CD8-positive, alpha-beta T cell (primary cell): ENCODE measurements at regions of chr11 and their contacts with region 1.

Region 1: DNA sequence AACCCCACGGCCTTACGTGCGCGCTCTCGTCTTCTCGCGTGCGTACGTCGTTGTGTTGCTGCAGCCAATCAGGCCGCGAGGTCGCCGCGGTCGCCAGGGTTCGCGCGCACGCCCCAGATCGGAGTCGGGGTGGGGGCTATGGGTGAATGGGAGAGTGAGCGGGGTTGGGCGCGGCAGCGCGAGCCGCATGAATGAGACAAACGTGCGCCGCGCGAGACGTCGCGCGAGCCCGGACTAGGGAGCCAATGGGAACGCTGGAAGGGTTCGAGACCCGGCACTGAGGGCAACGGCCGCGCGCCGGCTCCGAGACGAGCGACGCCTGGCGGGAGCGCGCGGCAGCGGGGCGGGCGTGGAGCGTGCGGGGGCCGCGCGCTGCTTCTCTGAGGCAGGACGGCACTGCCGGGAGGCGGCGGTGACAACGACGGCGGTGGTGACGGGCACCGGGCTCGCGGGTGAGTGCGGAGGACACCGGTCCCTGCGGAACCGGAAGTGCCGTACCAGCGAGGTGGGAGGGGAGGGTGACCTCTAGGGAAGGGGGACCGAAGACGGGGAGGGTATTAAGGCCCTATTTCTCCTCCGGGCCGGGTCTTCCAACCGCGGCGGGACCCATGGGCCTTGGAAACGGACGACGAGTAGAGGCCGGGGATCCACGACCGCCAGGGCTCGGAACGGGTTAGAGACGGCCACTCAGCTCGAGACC is at the start of gene ZDHHC5:
- DNase-seq: peak; percentile 99 to 100 (median 99)
- ATAC-seq: peak; percentile 85
- H3K4me3 ChIP-seq: peak within 1 kb of the TSS; percentile 83 to 96
- H3K4me3 Mint-ChIP-seq: peak within 1 kb of the TSS; percentile 85
- H3K27ac ChIP-seq: peak within 1 kb of the TSS; percentile 91 to 99
- H3K27ac Mint-ChIP-seq: peak within 1 kb of the TSS; percentile 97
- H3K4me1 ChIP-seq: peaks cover 41% of the 10 kb centered on the region
- H3K4me1 Mint-ChIP-seq: peaks cover 56% of the 10 kb centered on the region
- H3K27me3 ChIP-seq: no peaks in the 10 kb centered on the region
- H3K27me3 Mint-ChIP-seq: no peaks in the 10 kb centered on the region
- CTCF ChIP-seq: peak; percentile 31
- total RNA-seq, gene ZDHHC5: 65.0 to 66.7 TPM

Region 2: GRCh38 chr11:57303990-57304579 is 363.8 kb before region 1 on chr11:
- CTCF ChIA-PET with region 1: no interaction called
- POLR2A ChIA-PET with region 1: no interaction called
- intact Hi-C with region 1: no loop called
- DNase-seq: no peak
- ATAC-seq: no peak
- H3K4me3 ChIP-seq: no peak overlapping the region
- H3K4me3 Mint-ChIP-seq: no peak overlapping the region
- H3K27ac ChIP-seq: no peak overlapping the region
- H3K27ac Mint-ChIP-seq: no peak overlapping the region
- H3K4me1 ChIP-seq: no peaks in the 10 kb centered on the region
- H3K4me1 Mint-ChIP-seq: no peaks in the 10 kb centered on the region
- H3K27me3 ChIP-seq: no peaks in the 10 kb centered on the region
- H3K27me3 Mint-ChIP-seq: no peaks in the 10 kb centered on the region
- CTCF ChIP-seq: no peak

Region 3: DNA sequence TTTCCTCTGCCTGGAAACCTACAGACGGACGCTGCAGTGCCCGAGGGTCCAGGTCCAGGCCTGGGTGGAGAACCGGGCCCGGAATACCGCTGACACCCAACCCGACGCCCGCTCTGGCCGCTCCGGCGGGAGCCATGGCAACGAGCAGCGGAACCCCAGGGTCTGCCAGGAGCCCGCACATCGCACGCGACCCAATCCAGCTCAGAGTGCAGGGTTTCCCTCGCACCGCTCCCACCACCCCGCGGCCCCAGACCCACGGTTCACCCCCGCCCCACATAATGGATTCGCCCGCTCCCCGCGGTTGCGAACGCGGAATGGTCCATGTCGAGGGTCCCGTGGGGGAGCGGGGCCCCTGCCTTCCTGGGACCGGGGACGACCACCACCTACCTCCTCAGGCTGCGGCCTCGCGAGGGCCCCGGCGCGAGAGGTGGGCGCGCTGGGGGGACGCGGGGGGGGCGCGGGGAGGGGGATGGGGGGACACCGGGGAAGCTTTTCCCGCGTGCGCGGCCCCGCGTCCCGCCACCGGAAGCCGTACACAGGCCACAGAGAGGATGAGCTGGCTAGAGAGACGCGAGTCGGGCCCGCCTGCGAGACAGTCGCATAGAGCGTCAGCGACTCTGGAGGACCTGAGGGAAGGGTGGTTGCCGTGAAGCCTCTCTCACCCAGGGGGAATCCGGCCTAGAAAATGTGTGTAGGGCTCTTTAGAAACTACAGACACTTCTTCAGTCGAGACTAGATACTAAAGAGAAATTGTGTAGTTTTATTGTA is 332.4 kb before region 1 on chr11 and contains the start of gene SSRP1:
- CTCF ChIA-PET with region 1: no interaction called
- POLR2A ChIA-PET with region 1: interaction called, 3 read pairs
- intact Hi-C with region 1: loop called (anchors 1 to 5 kb)
- DNase-seq: peak; percentile 70 to 95 (median 86)
- ATAC-seq: peak; percentile 96
- H3K4me3 ChIP-seq: peak within 1 kb of the TSS; percentile 78 to 82
- H3K4me3 Mint-ChIP-seq: peak within 1 kb of the TSS; percentile 86
- H3K27ac ChIP-seq: peak within 1 kb of the TSS; percentile 83 to 91
- H3K27ac Mint-ChIP-seq: peak within 1 kb of the TSS; percentile 94
- H3K4me1 ChIP-seq: peaks cover 23% of the 10 kb centered on the region
- H3K4me1 Mint-ChIP-seq: peaks cover 33% of the 10 kb centered on the region
- H3K27me3 ChIP-seq: no peaks in the 10 kb centered on the region
- H3K27me3 Mint-ChIP-seq: no peaks in the 10 kb centered on the region
- CTCF ChIP-seq: no peak
- total RNA-seq, gene SSRP1: 34.3 to 36.3 TPM

Region 4: DNA sequence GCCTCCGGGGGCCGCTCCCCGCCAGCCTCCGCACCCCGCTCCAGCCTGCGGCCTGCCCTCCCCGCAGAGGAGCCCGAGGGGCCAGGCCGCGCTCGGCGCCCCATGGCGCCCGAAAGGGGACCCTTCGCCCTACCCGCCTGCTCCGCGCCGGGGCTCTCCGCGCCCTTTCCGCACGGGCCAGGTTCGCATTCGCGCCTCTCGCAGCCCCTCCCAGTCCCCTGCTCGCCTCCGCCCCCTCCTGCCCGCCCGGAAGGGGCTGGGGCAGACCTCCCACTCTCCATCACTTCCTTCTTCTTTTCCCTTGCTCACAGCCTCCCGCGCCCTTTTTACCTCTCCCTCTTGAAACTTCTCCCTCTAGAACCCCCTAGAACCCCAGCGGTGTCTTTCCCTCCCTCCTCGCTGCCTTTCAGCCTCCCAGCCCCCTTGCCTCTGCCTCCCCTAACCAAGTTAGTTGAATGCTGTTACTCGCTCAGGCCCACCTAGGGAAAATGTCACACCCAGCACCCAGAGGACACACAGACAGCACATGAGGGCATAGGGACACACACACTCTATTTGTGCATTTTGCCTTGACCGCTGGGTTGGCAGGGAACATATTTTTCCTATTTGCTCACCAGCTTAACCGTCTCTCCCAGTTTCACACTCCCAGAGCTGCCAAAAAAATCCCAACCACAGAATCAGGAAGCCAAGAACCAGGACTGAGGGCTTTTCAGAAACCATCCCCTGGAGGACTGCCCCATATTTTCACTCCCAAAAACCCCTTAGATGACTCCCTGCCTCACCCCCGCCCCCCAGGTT is 240.8 kb before region 1 on chr11 and contains the start of gene SLC43A3:
- CTCF ChIA-PET with region 1: no interaction called
- POLR2A ChIA-PET with region 1: no interaction called
- intact Hi-C with region 1: loop called in 1 of 2 experiments (anchors 1 kb)
- DNase-seq: peak in 8 of 9 experiments; percentile 46 to 80 (median 64)
- ATAC-seq: peak; percentile 32
- H3K4me3 ChIP-seq: peak within 1 kb of the TSS; percentile 47 to 63
- H3K4me3 Mint-ChIP-seq: peak within 1 kb of the TSS; percentile 86
- H3K27ac ChIP-seq: peak within 1 kb of the TSS in 1 of 2 experiments; percentile 85
- H3K27ac Mint-ChIP-seq: peak within 1 kb of the TSS; percentile 89
- H3K4me1 ChIP-seq: peaks cover 31% of the 10 kb centered on the region
- H3K4me1 Mint-ChIP-seq: peaks cover 46% of the 10 kb centered on the region
- H3K27me3 ChIP-seq: no peaks in the 10 kb centered on the region
- H3K27me3 Mint-ChIP-seq: no peaks in the 10 kb centered on the region
- CTCF ChIP-seq: no peak
- total RNA-seq, gene SLC43A3: 9.3 to 11.3 TPM

Region 5: DNA sequence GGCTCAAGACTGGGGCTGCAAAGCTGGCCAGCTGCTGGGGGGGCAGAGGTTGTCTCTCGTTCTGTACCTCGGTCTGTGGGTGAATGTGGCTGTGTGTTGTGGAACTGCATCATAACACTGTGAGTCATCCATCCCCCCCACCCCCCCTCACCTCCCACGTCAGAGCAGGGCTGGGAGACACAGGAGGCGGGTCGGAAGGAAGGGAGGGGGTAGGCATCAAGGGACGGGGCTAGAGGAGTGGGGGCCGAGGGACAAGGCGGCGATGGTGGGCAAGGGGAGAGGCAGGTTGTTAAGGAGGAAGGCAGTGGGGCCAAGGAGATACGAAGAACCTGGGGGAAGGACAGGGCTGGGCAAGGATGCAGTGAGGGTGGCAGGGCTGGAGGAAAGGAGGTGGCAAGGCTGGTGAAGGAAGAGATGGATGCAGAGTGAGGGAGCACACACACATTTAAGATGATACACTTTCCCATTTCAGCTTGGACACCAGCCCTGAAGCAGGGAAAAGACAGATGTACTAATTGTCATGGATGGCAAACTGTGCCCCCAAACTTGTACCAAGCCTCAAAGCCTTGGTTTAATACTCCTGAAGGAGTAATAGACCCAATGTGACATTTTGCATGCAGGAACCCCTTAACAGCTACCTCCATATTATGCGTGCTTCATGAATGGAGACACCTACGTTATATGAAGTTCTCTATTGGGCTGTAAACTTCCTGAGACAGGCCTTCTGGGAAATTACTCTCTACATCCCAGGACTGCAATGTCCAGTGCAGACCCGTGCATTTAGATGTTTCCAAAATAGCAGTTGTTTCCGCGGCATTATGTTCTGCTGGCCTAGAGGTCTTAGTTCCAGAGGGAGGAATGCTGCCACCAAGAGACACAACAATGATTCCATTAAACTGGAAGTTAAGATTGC is 17.8 kb before region 1 on chr11 and contains the start of gene YPEL4:
- CTCF ChIA-PET with region 1: interaction called, 5 read pairs
- POLR2A ChIA-PET with region 1: interaction called, 4 read pairs
- intact Hi-C with region 1: loop called (anchors 2 kb)
- DNase-seq: peak; percentile 52 to 93 (median 79)
- ATAC-seq: peak; percentile 88
- H3K4me3 ChIP-seq: peak within 1 kb of the TSS; percentile 53 to 78
- H3K4me3 Mint-ChIP-seq: peak within 1 kb of the TSS; percentile 86
- H3K27ac ChIP-seq: peak within 1 kb of the TSS; percentile 41 to 68
- H3K27ac Mint-ChIP-seq: peak within 1 kb of the TSS; percentile 91
- H3K4me1 ChIP-seq: peaks cover 19% of the 10 kb centered on the region
- H3K4me1 Mint-ChIP-seq: peaks cover 53% of the 10 kb centered on the region
- H3K27me3 ChIP-seq: peaks cover 0 to 20% of the 10 kb centered on the region in 2 experiments
- H3K27me3 Mint-ChIP-seq: peaks cover 41% of the 10 kb centered on the region
- CTCF ChIP-seq: no peak
- total RNA-seq, gene YPEL4: 7.2 to 7.9 TPM

Region 6: GRCh38 chr11:57657194-57658022 is 10.5 kb before region 1 on chr11 and contains the start of gene CLP1:
- CTCF ChIA-PET with region 1: interaction called, 4 read pairs
- POLR2A ChIA-PET with region 1: interaction called, 6 read pairs
- intact Hi-C with region 1: loop called (anchors 1 kb)
- DNase-seq: peak; percentile 97 to 100 (median 99)
- ATAC-seq: peak; percentile 94
- H3K4me3 ChIP-seq: peak within 1 kb of the TSS; percentile 59 to 74
- H3K4me3 Mint-ChIP-seq: peak within 1 kb of the TSS; percentile 94
- H3K27ac ChIP-seq: peak within 1 kb of the TSS; percentile 83
- H3K27ac Mint-ChIP-seq: peak within 1 kb of the TSS; percentile 90
- H3K4me1 ChIP-seq: peaks cover 11% of the 10 kb centered on the region
- H3K4me1 Mint-ChIP-seq: peaks cover 43% of the 10 kb centered on the region
- H3K27me3 ChIP-seq: no peaks in the 10 kb centered on the region
- H3K27me3 Mint-ChIP-seq: no peaks in the 10 kb centered on the region
- CTCF ChIP-seq: no peak
- total RNA-seq, gene CLP1: 22.7 to 27.1 TPM

Region 7: DNA sequence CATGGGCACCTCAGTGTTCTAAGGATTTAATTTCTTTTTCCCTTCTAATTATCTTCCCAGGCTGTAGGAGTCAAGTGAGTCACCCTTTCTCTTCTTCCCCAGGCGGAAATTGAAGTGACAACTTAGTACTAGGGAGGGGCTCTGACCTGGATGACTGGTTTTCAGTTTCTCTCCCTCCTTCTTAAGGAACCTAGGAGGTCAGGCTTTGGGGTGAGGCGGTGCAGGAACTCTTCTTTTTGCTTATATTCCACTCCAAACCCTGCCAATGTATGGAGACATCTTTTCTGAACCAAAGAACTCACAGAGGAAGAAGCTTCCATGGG is 12.6 kb after region 1 on chr11:
- CTCF ChIA-PET with region 1: no interaction called
- POLR2A ChIA-PET with region 1: no interaction called
- intact Hi-C with region 1: no loop called
- DNase-seq: no peak
- ATAC-seq: no peak
- H3K4me3 ChIP-seq: no peak overlapping the region
- H3K4me3 Mint-ChIP-seq: no peak overlapping the region
- H3K27ac ChIP-seq: no peak overlapping the region
- H3K27ac Mint-ChIP-seq: peak overlapping the region; percentile 52
- H3K4me1 ChIP-seq: peaks cover 39% of the 10 kb centered on the region
- H3K4me1 Mint-ChIP-seq: peaks cover 59% of the 10 kb centered on the region
- H3K27me3 ChIP-seq: no peaks in the 10 kb centered on the region
- H3K27me3 Mint-ChIP-seq: no peaks in the 10 kb centered on the region
- CTCF ChIP-seq: no peak

Region 8: DNA sequence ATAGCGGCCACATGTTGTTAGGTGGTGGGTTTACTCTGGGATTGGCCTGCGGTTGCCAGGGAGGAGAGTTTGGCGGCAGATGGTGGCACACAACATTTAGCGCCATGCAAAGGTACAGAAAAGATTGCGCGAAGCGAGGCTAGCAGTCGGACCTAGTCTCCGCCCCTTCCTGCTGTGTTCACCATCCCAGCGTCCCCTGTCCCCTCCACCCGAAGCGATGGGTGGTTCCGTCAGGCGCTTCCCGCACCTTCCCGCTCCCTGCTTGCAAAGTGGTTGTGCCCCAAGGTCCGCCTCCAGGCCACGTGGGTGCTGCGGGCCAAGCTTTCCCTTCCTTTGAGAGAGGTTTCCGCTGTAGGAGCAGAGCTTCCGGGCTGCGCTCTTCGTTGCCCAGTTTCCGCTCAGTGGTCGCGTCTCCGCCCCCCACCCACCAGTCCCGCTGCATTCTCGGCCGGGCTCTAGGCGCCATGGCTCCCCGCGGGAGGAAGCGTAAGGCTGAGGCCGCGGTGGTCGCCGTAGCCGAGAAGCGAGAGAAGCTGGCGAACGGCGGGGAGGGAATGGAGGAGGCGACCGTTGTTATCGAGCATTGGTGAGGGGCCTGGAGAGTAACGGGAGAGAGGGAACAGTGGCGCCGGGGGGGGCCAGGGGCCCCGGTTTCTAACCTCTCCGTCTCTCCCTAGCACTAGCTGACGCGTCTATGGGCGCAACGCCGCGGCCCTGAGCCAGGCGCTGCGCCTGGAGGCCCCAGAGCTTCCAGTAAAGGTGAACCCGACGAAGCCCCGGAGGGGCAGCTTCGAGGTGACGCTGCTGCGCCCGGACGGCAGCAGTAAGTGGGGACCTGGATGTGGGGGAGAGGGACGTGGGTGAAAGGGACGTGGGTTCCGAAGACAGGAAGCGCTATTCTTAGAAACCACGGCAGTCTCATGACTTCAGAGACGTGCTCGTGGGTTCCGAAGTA is 73.5 kb after region 1 on chr11 and contains the start of gene SELENOH:
- CTCF ChIA-PET with region 1: no interaction called
- POLR2A ChIA-PET with region 1: no interaction called
- intact Hi-C with region 1: loop called (anchors 1 kb)
- DNase-seq: peak; percentile 83 to 97 (median 91)
- ATAC-seq: peak; percentile 85
- H3K4me3 ChIP-seq: peak within 1 kb of the TSS; percentile 90 to 97
- H3K4me3 Mint-ChIP-seq: peak within 1 kb of the TSS; percentile 92
- H3K27ac ChIP-seq: peak within 1 kb of the TSS; percentile 97
- H3K27ac Mint-ChIP-seq: peak within 1 kb of the TSS; percentile 98
- H3K4me1 ChIP-seq: peaks cover 34% of the 10 kb centered on the region
- H3K4me1 Mint-ChIP-seq: peaks cover 41% of the 10 kb centered on the region
- H3K27me3 ChIP-seq: no peaks in the 10 kb centered on the region
- H3K27me3 Mint-ChIP-seq: no peaks in the 10 kb centered on the region
- CTCF ChIP-seq: no peak
- total RNA-seq, gene SELENOH: 40.8 to 44.1 TPM

Region 9: GRCh38 chr11:59550368-59550841 is 1882.5 kb after region 1 on chr11:
- CTCF ChIA-PET with region 1: no interaction called
- POLR2A ChIA-PET with region 1: no interaction called
- intact Hi-C with region 1: loop called in 1 of 2 experiments (anchors 10 kb)
- DNase-seq: peak; percentile 68 to 93 (median 79)
- ATAC-seq: peak; percentile 85
- H3K4me3 ChIP-seq: peak overlapping the region; percentile 62 to 67
- H3K4me3 Mint-ChIP-seq: peak overlapping the region; percentile 77
- H3K27ac ChIP-seq: peak overlapping the region; percentile 36 to 48
- H3K27ac Mint-ChIP-seq: peak overlapping the region; percentile 87
- H3K4me1 ChIP-seq: peaks cover 10% of the 10 kb centered on the region
- H3K4me1 Mint-ChIP-seq: peaks cover 23% of the 10 kb centered on the region
- H3K27me3 ChIP-seq: no peaks in the 10 kb centered on the region
- H3K27me3 Mint-ChIP-seq: no peaks in the 10 kb centered on the region
- CTCF ChIP-seq: no peak